ENCODE measurements at regions of chr7 and their contacts with region 1.

Region 1: DNA sequence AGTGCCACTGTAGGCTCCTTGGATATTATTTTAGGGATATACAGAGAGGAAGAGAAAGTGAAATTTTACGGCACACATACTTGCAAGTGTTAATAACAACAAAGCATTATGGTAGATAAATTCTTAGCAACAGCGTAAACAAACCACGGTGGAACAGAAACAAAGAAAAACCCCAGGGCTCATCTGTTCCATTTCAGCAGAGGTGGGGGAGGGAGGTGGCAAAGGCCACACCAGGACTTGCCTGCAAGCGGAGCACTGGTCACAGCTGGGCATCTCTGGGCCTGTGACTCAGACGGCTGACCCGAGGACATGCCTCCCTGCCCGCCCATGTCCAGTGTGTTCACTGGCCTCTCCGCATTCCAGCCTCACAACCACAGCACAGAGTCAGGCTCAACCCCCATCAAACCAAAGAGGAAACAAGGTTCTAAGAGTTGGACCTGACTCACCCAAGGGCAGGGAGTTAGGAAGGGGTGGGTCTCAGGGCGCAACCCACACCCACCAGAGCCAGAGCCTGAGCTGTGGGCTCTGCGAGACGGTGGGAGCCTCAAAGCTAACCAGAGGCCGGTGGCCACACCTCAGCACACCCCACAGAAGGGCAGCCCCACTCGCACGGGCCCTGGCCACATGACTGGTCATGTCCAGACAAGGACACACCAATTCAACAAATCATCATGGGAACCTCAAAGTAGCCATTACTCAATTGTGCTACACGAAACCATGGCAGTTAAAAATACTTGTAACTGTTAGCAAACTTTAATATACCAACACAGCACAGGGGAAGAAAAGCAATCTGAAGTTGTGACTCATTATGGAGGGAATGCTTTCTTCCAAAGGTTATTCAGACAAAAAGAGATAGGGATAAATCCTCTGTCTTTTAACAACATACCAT is 10.7 kb downstream of the ESYT2 start:
- DNase-seq: peak; percentile 93
- H3K4me3 Mint-ChIP-seq: peak overlapping the region; percentile 65
- H3K27ac Mint-ChIP-seq: peak overlapping the region; percentile 96
- H3K4me1 Mint-ChIP-seq: peaks cover 71% of the 10 kb centered on the region
- H3K27me3 Mint-ChIP-seq: no peaks in the 10 kb centered on the region
- CTCF ChIP-seq: no peak

Region 2: DNA sequence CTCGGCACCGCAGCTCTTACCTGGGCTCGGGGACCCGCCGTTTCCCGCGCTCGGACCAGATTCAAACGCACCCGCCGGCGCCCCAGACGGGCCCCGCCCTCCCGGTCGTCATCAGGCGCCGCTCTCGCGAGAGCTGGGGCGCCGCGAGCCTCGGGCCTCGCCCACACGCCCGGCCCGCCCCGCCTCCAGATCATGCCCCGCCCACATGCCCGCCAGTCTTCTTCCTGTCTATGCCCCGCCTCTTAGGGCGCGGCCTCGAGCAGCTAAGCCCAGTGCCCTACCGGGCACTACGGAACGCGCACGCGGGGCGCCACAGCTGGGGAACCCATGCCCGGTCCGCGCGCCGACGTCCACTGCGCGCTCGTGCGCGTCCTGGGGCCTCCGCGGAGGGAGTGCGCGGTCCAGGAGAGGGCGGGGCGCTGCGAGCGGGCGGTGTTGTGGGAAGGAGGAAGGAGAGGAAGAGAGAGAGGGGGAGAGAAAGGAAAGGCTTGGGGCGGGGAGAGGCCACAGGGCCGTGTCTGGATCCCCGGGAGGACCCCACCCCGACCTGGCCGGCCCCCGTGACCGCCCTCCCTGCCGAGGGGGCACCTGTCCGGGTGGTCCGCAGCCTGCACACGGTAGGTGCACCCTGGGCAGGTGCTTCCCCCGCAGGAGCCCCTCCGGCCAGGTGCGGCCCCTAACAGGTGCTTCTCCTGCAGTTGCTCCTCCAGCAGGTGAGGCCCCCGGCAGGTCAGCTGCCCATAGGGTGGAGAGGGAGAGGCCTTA is 113.7 kb before region 1 on chr7 and contains the start of gene NCAPG2:
- CTCF ChIA-PET with region 1: no interaction called
- intact Hi-C with region 1: loop called (anchors 5 kb)
- DNase-seq: peak; percentile 98
- H3K4me3 Mint-ChIP-seq: peak within 1 kb of the TSS; percentile 95
- H3K27ac Mint-ChIP-seq: peak within 1 kb of the TSS; percentile 83
- H3K4me1 Mint-ChIP-seq: peaks cover 39% of the 10 kb centered on the region
- H3K27me3 Mint-ChIP-seq: no peaks in the 10 kb centered on the region
- CTCF ChIP-seq: no peak
- total RNA-seq, gene NCAPG2: 70.1 and 81.7 TPM in 2 replicates

Region 3: DNA sequence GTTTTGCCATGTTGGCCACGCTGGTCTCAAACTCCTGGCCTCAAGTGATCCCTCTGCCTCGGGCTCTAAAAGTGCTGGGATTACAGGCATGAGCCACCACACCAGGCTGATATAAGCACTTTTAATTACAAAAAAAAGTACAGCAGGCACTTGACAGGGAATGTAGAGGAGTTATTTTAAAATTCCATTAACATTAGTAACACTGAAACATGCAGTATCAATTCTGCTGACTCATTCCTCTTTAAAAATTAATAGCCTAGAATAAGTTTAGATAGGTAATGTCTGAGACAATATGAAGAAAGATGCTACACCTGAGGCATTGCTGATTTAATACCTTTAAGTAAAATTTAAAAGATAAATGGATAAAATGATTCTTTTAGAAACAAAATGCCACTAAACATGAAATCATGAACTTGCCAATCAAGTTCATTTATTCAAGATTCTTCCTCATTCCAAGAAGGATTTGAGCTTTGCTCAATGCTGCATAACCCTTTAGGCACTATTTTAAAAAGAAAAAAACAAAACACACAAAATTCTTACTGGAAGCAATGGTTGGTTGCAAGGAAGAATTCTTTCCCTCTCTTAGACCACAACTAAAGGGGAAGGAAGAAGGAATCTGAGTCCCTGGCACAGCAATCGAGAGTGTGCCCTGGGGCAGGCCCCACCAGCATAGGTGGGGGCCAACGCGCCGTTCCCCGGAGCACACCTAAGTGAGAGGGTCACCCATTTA is 15.9 kb before region 1 on chr7:
- CTCF ChIA-PET with region 1: interaction called, 4 read pairs
- intact Hi-C with region 1: loop called (anchors 2 kb)
- DNase-seq: no peak
- H3K4me3 Mint-ChIP-seq: peak overlapping the region; percentile 55
- H3K27ac Mint-ChIP-seq: peak overlapping the region; percentile 86
- H3K4me1 Mint-ChIP-seq: no peaks in the 10 kb centered on the region
- H3K27me3 Mint-ChIP-seq: no peaks in the 10 kb centered on the region
- CTCF ChIP-seq: no peak

Region 4: DNA sequence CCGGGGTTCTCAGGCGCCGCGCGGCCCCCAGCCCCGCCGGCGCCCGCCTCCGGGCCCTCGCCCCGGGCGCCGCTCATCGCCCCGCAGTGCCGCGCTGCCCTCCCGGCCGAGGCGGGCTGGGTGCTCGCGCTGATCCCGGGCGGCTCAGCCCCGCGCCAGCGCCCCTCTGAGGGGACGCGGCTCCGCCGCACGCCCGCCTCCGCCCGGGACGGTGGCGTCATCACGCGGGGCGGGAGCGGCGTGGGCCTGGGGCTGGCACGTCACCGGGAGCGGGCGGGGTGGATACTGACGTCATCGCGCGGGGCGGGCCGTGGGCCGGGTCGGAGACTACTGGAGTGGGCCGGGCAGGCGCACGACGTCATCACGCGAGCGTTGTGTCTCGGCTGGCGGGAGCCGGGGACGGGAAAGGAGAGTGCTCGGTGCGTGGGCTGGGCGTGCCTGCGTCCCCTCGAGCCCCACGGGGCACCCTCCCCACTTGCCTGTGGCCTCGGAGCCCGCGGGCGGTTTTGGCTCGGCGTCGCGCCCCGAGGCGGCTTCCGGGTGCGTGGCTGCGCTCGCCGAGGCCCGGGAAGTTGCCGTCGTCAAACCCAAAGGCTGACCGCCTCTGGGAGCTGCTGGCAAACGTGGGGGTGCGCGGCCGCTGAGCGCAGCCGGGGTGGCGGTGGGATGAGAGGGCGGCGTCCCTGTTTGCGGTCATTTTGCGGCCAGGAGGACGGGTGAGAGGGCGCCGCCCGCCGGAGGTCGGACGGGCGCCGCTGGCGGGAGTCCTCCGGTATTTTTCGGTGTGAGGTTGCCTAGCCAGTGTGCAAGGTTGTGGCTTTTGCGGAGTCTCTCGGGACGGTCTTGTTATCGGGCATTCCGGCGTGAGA is 11.0 kb after region 1 on chr7 and contains the start of gene ESYT2:
- CTCF ChIA-PET with region 1: interaction called, 5 read pairs
- intact Hi-C with region 1: loop called (anchors 1 kb)
- DNase-seq: peak; percentile 99
- H3K4me3 Mint-ChIP-seq: peak within 1 kb of the TSS; percentile 73
- H3K27ac Mint-ChIP-seq: peak within 1 kb of the TSS; percentile 88
- H3K4me1 Mint-ChIP-seq: peaks cover 12% of the 10 kb centered on the region
- H3K27me3 Mint-ChIP-seq: no peaks in the 10 kb centered on the region
- CTCF ChIP-seq: no peak
- total RNA-seq, gene ESYT2: 61.2 and 66.6 TPM in 2 replicates

Region 5: GRCh38 chr7:158910254-158911053 is 91.9 kb after region 1 on chr7:
- CTCF ChIA-PET with region 1: no interaction called
- intact Hi-C with region 1: no loop called
- DNase-seq: no peak
- H3K4me3 Mint-ChIP-seq: no peak overlapping the region
- H3K27ac Mint-ChIP-seq: no peak overlapping the region
- H3K4me1 Mint-ChIP-seq: no peaks in the 10 kb centered on the region
- H3K27me3 Mint-ChIP-seq: no peaks in the 10 kb centered on the region
- CTCF ChIP-seq: no peak

Measured in Calu3 (cell line).